ENCODE measurements at regions of chr17 and their contacts with region 1.

Region 1: DNA sequence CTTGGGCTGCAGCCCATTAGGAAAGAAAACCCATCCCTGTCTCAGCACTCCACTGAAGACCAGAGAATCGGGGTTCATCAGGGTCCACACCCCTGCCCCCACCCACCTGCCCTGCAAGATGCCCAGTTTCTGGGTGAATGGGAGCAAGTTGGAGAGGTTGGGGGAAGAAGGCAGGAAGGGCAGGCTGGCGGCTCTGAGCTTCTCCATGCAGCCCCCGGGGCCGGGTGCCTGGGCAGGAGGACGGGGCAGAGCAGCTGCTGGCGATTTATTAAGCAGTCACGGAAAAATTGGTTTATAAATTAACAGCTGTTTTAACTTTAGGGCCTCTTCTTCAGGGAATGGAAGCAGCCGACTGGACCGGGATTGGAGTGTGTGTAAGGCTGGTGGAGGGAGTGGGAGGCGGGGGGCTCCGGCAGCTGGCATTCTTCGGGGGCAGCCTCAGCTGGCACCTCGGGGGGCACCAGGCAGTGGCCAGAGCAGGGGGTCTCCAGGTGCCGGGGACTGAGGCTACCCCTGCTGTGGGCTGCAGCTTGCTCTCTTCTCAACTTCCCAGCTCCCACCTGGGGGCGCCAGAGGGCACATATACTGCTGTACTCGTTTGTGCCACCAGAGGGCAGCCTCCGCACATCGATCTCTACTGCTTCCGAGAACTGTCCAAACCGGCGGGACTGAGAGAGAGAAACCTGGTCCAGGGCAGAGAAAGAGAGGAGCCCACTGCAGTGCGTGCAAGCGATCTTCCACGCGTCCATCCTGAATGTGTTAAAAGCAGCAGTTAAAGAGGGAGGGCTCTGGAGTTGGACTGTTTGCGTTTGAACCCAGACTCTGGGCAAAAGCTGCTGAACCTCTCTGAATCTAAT is 5.0 kb upstream of the PPP1R1B start:
- DNase-seq: peak; percentile 91
- ATAC-seq: peak; percentile 51
- H3K4me3 Mint-ChIP-seq: no peak overlapping the region
- H3K27ac Mint-ChIP-seq: no peak overlapping the region
- H3K4me1 Mint-ChIP-seq: peaks cover 31% of the 10 kb centered on the region
- H3K27me3 Mint-ChIP-seq: peaks cover 82% of the 10 kb centered on the region
- CTCF ChIP-seq: peak; percentile 100

Region 2: GRCh38 chr17:39547713-39548478 is 73.9 kb before region 1 on chr17:
- CTCF ChIA-PET with region 1: interaction called, 390 read pairs
- POLR2A ChIA-PET with region 1: interaction called, 3 read pairs
- DNase-seq: peak; percentile 88
- ATAC-seq: peak; percentile 91
- H3K4me3 Mint-ChIP-seq: no peak overlapping the region
- H3K27ac Mint-ChIP-seq: no peak overlapping the region; the same call in 1 of the 2 replicates
- H3K4me1 Mint-ChIP-seq: no peaks in the 10 kb centered on the region
- H3K27me3 Mint-ChIP-seq: no peaks in the 10 kb centered on the region; the same call in 1 of the 2 replicates
- CTCF ChIP-seq: peak; percentile 94

Region 3: GRCh38 chr17:39579318-39580081 is 42.3 kb before region 1 on chr17:
- CTCF ChIA-PET with region 1: interaction called, 39 read pairs
- POLR2A ChIA-PET with region 1: no interaction called
- DNase-seq: peak; percentile 69
- ATAC-seq: peak; percentile 91
- H3K4me3 Mint-ChIP-seq: peak overlapping the region; percentile 29
- H3K27ac Mint-ChIP-seq: peak overlapping the region; percentile 46; the same call in 1 of the 2 replicates
- H3K4me1 Mint-ChIP-seq: peaks cover 37% of the 10 kb centered on the region
- H3K27me3 Mint-ChIP-seq: peaks cover 14% of the 10 kb centered on the region
- CTCF ChIP-seq: no peak

Region 4: GRCh38 chr17:39605492-39606433 is 16.0 kb before region 1 on chr17:
- CTCF ChIA-PET with region 1: interaction called, 98 read pairs
- POLR2A ChIA-PET with region 1: no interaction called
- DNase-seq: peak; percentile 48
- ATAC-seq: peak; percentile 19
- H3K4me3 Mint-ChIP-seq: peak overlapping the region; percentile 60
- H3K27ac Mint-ChIP-seq: no peak overlapping the region
- H3K4me1 Mint-ChIP-seq: peaks cover 45% of the 10 kb centered on the region
- H3K27me3 Mint-ChIP-seq: peaks cover 100% of the 10 kb centered on the region
- CTCF ChIP-seq: no peak

Region 5: GRCh38 chr17:39668199-39668966 is 46.6 kb after region 1 on chr17 and contains the start of gene PNMT:
- CTCF ChIA-PET with region 1: interaction called, 876 read pairs
- POLR2A ChIA-PET with region 1: interaction called, 4 read pairs
- DNase-seq: peak; percentile 83
- ATAC-seq: peak; percentile 34
- H3K4me3 Mint-ChIP-seq: peak within 1 kb of the TSS; percentile 71
- H3K27ac Mint-ChIP-seq: no peak within 1 kb of the TSS
- H3K4me1 Mint-ChIP-seq: peaks cover 48% of the 10 kb centered on the region
- H3K27me3 Mint-ChIP-seq: peaks cover 47% of the 10 kb centered on the region
- CTCF ChIP-seq: peak; percentile 26; the same call in 1 of the 2 replicates
- total RNA-seq, gene PNMT: 2.4 to 3.1 TPM (median 2.7 TPM) in 3 replicates

Region 6: GRCh38 chr17:39699818-39700147 is 78.0 kb after region 1 on chr17 and contains the start of gene ERBB2:
- CTCF ChIA-PET with region 1: interaction called, 27 read pairs
- POLR2A ChIA-PET with region 1: no interaction called
- DNase-seq: peak; percentile 73
- ATAC-seq: peak; percentile 43
- H3K4me3 Mint-ChIP-seq: peak within 1 kb of the TSS; percentile 95
- H3K27ac Mint-ChIP-seq: peak within 1 kb of the TSS; percentile 96
- H3K4me1 Mint-ChIP-seq: peaks cover 73% of the 10 kb centered on the region
- H3K27me3 Mint-ChIP-seq: no peaks in the 10 kb centered on the region
- CTCF ChIP-seq: no peak
- total RNA-seq, gene ERBB2: 153 to 209 TPM (median 158 TPM) in 3 replicates

Region 7: GRCh38 chr17:39754161-39754951 is 132.6 kb after region 1 on chr17:
- CTCF ChIA-PET with region 1: interaction called, 130 read pairs
- POLR2A ChIA-PET with region 1: no interaction called
- DNase-seq: peak; percentile 81
- ATAC-seq: peak; percentile 64
- H3K4me3 Mint-ChIP-seq: peak overlapping the region; percentile 42
- H3K27ac Mint-ChIP-seq: no peak overlapping the region
- H3K4me1 Mint-ChIP-seq: peaks cover 57% of the 10 kb centered on the region
- H3K27me3 Mint-ChIP-seq: peaks cover 19% of the 10 kb centered on the region
- CTCF ChIP-seq: peak; percentile 98